ENCODE measurements at regions of chr19 and their contacts with region 1.

Region 1: DNA sequence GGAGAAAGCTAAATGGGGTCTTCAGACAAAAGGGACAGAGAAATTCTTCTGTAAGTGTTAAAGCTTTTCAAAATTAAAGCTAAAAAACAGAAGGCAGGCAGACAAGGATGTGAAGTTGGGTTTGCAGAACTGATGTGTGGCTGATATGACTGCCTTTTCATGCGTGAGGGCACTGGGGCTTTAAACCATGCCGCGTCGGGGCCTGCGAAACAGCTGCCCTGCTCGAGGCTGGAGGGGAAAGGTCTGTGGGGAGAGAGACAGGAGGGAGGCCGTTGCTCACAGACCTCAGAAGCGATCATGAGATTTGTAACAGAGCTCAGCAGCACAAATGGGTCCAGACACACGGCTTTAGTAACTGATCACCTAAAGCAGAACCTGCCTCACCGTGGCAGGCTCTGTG is 23.5 kb downstream of the CAPS start:
- DNase-seq: no peak
- ATAC-seq: no peak
- H3K4me3 ChIP-seq: no peak overlapping the region
- H3K27ac ChIP-seq: no peak overlapping the region
- H3K4me1 ChIP-seq: no peaks in the 10 kb centered on the region
- H3K27me3 ChIP-seq: no peaks in the 10 kb centered on the region
- CTCF ChIP-seq: no peak
- POLR2A ChIP-seq: no peak
- RAD21 ChIP-seq: no peak

Region 2: DNA sequence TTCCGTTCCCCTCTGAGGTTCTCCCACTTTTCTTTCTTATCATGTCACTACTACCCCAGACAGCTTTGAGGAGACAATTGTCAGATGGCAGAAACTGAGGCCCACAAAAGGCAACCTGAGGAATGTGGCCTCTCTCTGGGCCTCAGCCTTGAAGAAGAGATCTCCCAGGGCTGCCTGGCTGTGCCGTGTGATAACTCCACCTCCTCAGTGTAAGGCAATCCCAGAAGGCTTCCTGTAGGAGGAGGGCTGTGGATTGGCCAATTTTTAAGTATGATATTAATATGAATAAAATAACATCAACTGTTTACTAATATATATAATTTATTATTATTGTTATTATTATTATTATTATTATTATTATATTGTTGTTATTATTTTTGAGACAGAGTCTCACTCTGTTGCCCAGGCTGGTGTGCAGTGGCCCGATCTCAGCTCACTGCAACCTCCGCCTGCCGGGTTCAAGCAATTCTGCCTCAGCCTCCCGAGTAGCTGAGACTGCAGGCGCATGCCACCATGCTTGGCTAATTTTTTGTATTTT is 142.1 kb before region 1 on chr19:
- CTCF ChIA-PET with region 1: no interaction called
- POLR2A ChIA-PET with region 1: no interaction called
- RAD21 ChIA-PET with region 1: no interaction called
- intact Hi-C with region 1: no loop called
- DNase-seq: no peak
- ATAC-seq: no peak
- H3K4me3 ChIP-seq: no peak overlapping the region
- H3K27ac ChIP-seq: no peak overlapping the region
- H3K4me1 ChIP-seq: peaks cover 6 to 15% of the 10 kb centered on the region in 2 experiments; a peak in 3 of 4 replicates
- H3K27me3 ChIP-seq: no peaks in the 10 kb centered on the region
- CTCF ChIP-seq: no peak
- POLR2A ChIP-seq: no peak
- RAD21 ChIP-seq: no peak

Region 3: GRCh38 chr19:5958123-5959003 is 20.8 kb after region 1 on chr19:
- CTCF ChIA-PET with region 1: no interaction called
- POLR2A ChIA-PET with region 1: no interaction called
- RAD21 ChIA-PET with region 1: interaction called in 1 of 2 experiments, 12 read pairs
- intact Hi-C with region 1: no loop called
- DNase-seq: no peak
- ATAC-seq: no peak
- H3K4me3 ChIP-seq: no peak overlapping the region
- H3K27ac ChIP-seq: no peak overlapping the region
- H3K4me1 ChIP-seq: peaks cover 0 to 2% of the 10 kb centered on the region in 2 experiments; a peak in 1 of 4 replicates
- H3K27me3 ChIP-seq: no peaks in the 10 kb centered on the region
- CTCF ChIP-seq: no peak
- POLR2A ChIP-seq: no peak
- RAD21 ChIP-seq: no peak

Region 4: GRCh38 chr19:5977785-5978605 is 40.4 kb after region 1 on chr19 and contains the start of gene RANBP3:
- CTCF ChIA-PET with region 1: no interaction called
- POLR2A ChIA-PET with region 1: no interaction called
- RAD21 ChIA-PET with region 1: no interaction called
- intact Hi-C with region 1: no loop called
- DNase-seq: peak; percentile 97
- ATAC-seq: peak; percentile 95
- H3K4me3 ChIP-seq: peak within 1 kb of the TSS; percentile 93 to 96
- H3K27ac ChIP-seq: peak within 1 kb of the TSS; percentile 76
- H3K4me1 ChIP-seq: peaks cover 7 to 22% of the 10 kb centered on the region in 2 experiments
- H3K27me3 ChIP-seq: no peaks in the 10 kb centered on the region
- CTCF ChIP-seq: no peak
- POLR2A ChIP-seq: peak; percentile 68
- RAD21 ChIP-seq: no peak
- total RNA-seq, gene RANBP3: 62.4 TPM

Region 5: DNA sequence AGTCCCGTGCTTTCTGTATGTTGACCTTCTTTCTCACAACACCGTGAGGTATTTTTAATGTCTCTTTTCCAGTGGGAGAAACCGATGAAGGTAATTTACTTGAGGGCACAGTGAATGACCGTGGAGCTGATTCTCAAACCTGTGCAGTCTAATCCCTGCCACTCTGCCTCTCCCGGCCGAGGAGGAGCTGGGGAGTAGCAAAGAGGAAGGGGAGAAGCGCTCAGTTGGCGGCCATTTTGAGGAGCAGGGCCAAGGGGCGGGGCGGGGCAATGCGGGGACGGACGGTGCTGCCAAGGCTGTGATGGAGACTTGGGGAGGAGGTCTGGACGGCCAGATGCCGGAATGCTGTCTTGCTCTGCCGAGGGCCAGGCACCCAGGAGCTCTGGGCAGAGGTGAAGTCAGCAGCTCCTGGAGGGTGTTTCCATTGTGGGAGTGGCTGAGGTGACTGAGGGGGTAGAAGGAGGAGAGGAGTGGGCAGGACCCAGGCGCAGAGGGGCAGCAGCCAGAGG is 52.8 kb after region 1 on chr19:
- CTCF ChIA-PET with region 1: no interaction called
- POLR2A ChIA-PET with region 1: no interaction called
- RAD21 ChIA-PET with region 1: no interaction called
- intact Hi-C with region 1: no loop called
- DNase-seq: no peak
- ATAC-seq: peak; percentile 74
- H3K4me3 ChIP-seq: peak overlapping the region; percentile 27 to 48
- H3K27ac ChIP-seq: 0 out of 2 replicates have a peak overlapping the region, but pooled peaks have one; percentile 8
- H3K4me1 ChIP-seq: peaks cover 0 to 15% of the 10 kb centered on the region in 2 experiments; a peak in 2 of 4 replicates
- H3K27me3 ChIP-seq: no peaks in the 10 kb centered on the region
- CTCF ChIP-seq: no peak
- POLR2A ChIP-seq: no peak
- RAD21 ChIP-seq: no peak

Region 6: GRCh38 chr19:6010107-6010506 is 72.6 kb after region 1 on chr19:
- CTCF ChIA-PET with region 1: no interaction called
- POLR2A ChIA-PET with region 1: no interaction called
- RAD21 ChIA-PET with region 1: no interaction called
- intact Hi-C with region 1: no loop called
- DNase-seq: no peak
- ATAC-seq: no peak
- H3K4me3 ChIP-seq: no peak overlapping the region
- H3K27ac ChIP-seq: no peak overlapping the region
- H3K4me1 ChIP-seq: no peaks in the 10 kb centered on the region
- H3K27me3 ChIP-seq: no peaks in the 10 kb centered on the region
- CTCF ChIP-seq: no peak
- POLR2A ChIP-seq: no peak
- RAD21 ChIP-seq: no peak

Measured in HCT116 (cell line).